ENCODE measurements at regions of chr4 and their contacts with region 1.

Region 1: DNA sequence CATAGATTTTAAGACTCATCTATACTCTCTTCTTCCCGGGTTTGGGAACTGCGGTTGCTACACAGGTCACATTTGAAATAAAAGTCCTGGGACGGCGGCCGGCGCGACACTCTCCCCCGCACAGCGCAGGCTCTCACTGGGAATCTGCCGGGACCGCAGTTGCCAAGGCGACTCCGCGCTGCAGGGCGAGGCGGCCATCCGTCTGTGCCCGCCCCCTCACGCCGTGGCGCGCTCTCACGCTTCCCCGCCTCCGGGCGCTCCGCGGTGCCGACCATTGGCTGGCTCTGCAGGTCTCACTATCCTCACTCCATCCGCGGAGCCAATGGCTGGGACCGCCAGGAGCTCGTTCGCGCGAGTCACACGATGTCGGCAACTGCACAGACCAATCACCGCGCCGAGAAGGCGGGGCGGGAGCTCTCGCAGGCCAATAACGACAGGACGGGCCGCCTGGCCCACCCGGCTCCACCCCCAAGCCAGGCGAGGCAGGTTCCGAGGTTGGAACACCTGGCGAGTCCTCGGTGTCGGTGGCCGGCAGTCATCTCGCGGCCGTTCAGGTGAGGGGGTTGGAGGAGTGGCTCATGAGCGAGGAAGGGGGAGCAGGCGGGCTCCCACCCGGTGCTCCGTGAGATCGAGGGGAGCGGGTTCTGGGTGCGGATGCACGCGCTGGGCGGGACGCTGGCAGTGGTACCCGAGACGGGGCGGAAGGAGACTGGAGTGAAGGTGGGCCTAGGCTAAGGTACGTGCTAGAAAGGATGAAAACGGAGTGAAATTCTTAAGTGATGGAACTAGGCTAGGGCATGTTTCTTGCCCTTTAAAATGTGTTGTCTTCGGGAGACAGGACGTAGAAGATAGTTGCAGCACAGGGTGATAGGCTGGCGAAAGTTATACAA is at the start of gene MSMO1:
- DNase-seq: peak; percentile 94
- H3K4me3 ChIP-seq: peak within 1 kb of the TSS; percentile 69
- H3K27me3 ChIP-seq: no peaks in the 10 kb centered on the region
- CTCF ChIP-seq: no peak
- polyA plus RNA-seq, gene MSMO1: 14.9 and 25.0 TPM in 2 replicates

Region 2: GRCh38 chr4:165378745-165379677 is 51.6 kb after region 1 on chr4 and contains the start of gene CPE:
- CTCF ChIA-PET with region 1: interaction called, 4 read pairs
- POLR2A ChIA-PET with region 1: interaction called, 12 read pairs
- DNase-seq: no peak
- H3K4me3 ChIP-seq: peak within 1 kb of the TSS; percentile 43
- H3K27me3 ChIP-seq: peaks cover 8% of the 10 kb centered on the region
- CTCF ChIP-seq: peak; percentile 56
- polyA plus RNA-seq, gene CPE: 0.33 and 0.44 TPM in 2 replicates

Measured in BJ (cell line).